Activated CD4-positive, alpha-beta memory T cell treated with anti-CD3 and anti-CD28 coated beads for 36 hours (primary cell): ENCODE measurements at regions of chr5 and their contacts with region 1.

Region 1: DNA sequence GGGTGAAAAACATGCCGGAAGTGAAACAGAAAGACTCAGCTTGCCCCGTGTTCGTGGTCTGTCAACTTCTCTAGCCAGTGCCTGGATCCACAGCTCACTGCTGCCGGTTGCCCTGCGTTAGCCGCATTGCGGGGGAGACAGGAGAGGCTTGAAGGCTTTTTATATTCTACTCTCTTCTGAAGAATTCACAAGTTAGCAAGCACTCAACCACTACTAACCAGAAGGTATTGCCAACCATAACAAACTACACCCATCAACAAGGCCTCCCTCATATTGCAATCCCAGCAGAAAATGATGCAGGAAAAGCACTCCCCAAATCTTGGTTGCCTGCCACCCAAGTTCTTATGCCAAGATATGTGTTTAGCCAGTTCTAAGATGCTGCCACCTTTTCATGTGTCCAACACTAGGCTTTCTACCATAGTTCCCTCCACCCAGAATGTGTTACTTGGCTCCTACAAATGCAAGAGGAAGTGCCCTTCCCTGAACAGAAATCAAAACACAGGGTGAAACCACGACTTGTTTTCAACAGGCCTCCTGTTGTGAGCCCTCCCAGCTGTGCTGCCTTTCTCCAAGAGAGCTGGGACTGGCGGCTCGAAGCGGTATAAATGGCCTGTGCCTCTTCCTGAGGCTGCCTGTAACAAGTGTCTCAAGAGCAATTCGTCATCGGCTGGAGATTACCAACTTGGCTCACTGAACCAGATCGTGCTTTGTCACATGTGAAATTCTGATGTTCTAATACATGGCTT is 129.0 kb downstream of the SNX18 start:
- DNase-seq: peak; percentile 85
- H3K4me3 Mint-ChIP-seq: peak overlapping the region; percentile 33
- H3K27ac Mint-ChIP-seq: peak overlapping the region; percentile 80
- H3K4me1 Mint-ChIP-seq: peaks cover 50% of the 10 kb centered on the region
- H3K27me3 Mint-ChIP-seq: no peaks in the 10 kb centered on the region

Region 2: GRCh38 chr5:54610197-54610944 is 36.2 kb before region 1 on chr5:
- CTCF ChIA-PET with region 1: interaction called, 4 read pairs
- POLR2A ChIA-PET with region 1: no interaction called
- intact Hi-C with region 1: loop called (anchors 1 kb)
- DNase-seq: peak; percentile 32
- H3K4me3 Mint-ChIP-seq: no peak overlapping the region
- H3K27ac Mint-ChIP-seq: peak overlapping the region; percentile 29
- H3K4me1 Mint-ChIP-seq: peaks cover 21% of the 10 kb centered on the region
- H3K27me3 Mint-ChIP-seq: no peaks in the 10 kb centered on the region

Region 3: DNA sequence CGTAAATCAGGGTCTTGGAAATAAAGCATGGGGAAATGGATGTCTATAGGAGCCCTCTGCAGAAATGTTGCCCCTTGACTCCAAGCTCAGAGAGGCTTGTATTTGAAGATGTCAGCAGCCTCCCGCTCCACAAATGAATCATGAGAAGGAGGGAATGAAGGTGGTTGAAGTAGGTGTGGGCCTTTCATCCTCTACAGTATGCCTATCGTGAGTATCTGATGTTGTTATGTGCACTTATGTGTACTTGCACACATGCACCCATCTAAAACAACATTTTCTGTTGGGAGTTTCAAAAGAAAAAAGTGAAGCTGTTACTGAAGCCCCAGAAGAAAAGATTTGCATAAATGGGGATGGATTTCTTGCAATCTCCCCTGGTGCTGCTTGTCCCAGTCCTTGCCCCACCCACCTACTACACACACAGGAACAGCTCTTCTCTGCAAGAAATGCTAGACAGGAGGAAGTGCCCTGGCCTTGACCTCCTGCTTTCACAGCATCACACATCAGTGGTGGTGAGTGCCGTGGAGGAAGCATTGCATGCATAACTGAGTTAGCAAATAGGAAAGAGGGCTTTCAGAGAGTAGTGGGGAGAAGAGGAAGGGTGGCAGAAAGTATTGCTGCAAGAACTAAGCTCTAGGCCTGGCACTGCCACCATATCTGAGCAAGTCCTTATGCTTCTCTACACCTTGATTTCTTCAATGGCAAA is 27.1 kb after region 1 on chr5:
- CTCF ChIA-PET with region 1: no interaction called
- POLR2A ChIA-PET with region 1: no interaction called
- intact Hi-C with region 1: loop called (anchors 2 kb)
- DNase-seq: peak; percentile 69
- H3K4me3 Mint-ChIP-seq: no peak overlapping the region
- H3K27ac Mint-ChIP-seq: no peak overlapping the region
- H3K4me1 Mint-ChIP-seq: peaks cover 42% of the 10 kb centered on the region
- H3K27me3 Mint-ChIP-seq: no peaks in the 10 kb centered on the region

Region 4: GRCh38 chr5:54743997-54744788 is 97.7 kb after region 1 on chr5:
- CTCF ChIA-PET with region 1: no interaction called
- POLR2A ChIA-PET with region 1: no interaction called
- intact Hi-C with region 1: loop called (anchors 1 kb)
- DNase-seq: peak; percentile 75
- H3K4me3 Mint-ChIP-seq: peak overlapping the region; percentile 30
- H3K27ac Mint-ChIP-seq: peak overlapping the region; percentile 83
- H3K4me1 Mint-ChIP-seq: peaks cover 23% of the 10 kb centered on the region
- H3K27me3 Mint-ChIP-seq: no peaks in the 10 kb centered on the region